ENCODE measurements at regions of chr1 and their contacts with region 1.

Region 1: GRCh38 chr1:156383023-156383422 is 14.0 kb downstream of the RHBG start:
- DNase-seq: peak; percentile 51
- ATAC-seq: peak; percentile 98
- H3K4me3 ChIP-seq: no peak overlapping the region
- H3K27ac ChIP-seq: no peak overlapping the region
- H3K4me1 ChIP-seq: no peaks in the 10 kb centered on the region
- H3K27me3 ChIP-seq: peaks cover 23% of the 10 kb centered on the region
- CTCF ChIP-seq: peak; percentile 86
- POLR2A ChIP-seq: no peak
- RAD21 ChIP-seq: peak; percentile 87

Region 2: DNA sequence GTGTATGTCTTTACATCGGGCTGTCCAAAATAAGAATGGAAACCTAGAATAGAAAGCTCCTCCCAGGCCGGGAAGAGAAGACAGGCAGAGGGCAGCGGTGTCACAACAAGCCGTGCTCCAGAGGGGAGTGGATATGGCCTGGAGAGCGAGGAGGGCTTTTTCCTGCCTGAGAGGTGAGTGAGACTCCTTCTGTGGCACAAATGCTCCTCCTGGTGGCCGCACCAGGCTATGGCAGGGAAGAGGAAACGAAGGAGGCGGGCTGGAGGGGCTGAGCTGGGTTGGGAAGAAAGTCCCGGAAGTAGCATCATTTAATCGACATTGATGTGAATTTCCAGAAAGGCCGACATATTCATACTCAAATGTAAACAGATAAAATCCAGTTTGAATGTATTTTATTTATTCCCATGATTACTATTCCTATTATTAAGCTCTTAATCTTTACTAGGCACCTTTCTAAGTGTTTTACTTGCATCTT is 62.8 kb after region 1 on chr1:
- CTCF ChIA-PET with region 1: interaction called, 69 read pairs
- POLR2A ChIA-PET with region 1: no interaction called
- dilution Hi-C with region 1: no loop called
- in situ Hi-C with region 1: loop called (anchors 10 kb)
- intact Hi-C with region 1: loop called (anchors 1 kb)
- DNase-seq: peak; percentile 69
- ATAC-seq: peak; percentile 100
- H3K4me3 ChIP-seq: no peak overlapping the region
- H3K27ac ChIP-seq: no peak overlapping the region
- H3K4me1 ChIP-seq: no peaks in the 10 kb centered on the region
- H3K27me3 ChIP-seq: peaks cover 62% of the 10 kb centered on the region
- CTCF ChIP-seq: peak; percentile 96
- POLR2A ChIP-seq: no peak
- RAD21 ChIP-seq: peak; percentile 95

Measured in IMR-90 (cell line).